Mammary epithelial cell (primary cell): ENCODE measurements at regions of chr18 and their contacts with region 1.

Region 1: DNA sequence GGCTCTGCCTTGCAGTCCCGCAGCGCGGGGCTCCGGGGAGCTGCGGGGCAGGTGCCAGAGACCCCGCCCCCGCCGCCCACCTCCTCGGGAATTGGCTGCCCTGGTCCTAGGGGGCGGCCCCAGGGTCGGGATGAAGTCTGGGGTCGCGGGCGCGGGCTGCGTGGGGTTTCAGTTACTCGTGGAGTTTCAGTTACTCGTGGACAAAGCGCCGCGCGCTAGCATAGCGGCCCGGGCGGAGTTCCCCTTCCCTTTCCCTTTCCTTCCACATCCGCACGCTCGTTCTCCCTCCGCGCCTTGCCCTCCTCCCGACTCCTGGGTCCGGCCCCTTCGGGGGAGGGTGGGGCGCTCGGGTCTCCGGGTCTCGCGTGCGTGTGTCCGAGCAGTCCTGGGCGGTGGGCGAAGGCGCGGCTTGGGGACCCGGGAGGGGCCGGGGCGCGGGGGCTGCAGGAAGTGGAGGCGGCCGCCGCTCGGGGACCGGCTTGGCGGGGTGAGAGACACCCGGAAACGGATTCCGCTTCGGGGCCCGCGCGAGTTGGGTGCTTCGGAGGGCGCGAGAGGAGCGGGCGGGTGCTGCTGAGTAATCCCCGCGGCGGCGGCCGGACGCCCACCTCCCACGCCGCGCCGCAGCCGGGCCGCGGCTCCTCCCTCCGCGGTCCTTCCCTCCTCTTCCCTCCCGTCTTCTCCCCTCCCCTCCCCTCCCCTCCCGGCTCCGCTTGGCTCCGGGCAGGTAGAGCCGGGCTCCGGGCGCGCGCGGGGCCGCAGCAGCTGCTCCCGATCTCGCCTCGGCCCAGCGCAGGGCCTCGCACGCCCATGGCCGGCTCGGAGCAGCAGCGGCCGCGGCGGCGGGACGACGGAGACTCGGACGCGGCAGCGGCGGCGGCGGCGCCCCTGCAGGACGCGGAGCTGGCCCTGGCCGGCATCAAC is at the start of gene TTC39C:
- DNase-seq: peak; percentile 83
- H3K4me3 ChIP-seq: peak within 1 kb of the TSS; percentile 75 to 94 (median 84)
- H3K27ac ChIP-seq: peak within 1 kb of the TSS; percentile 69
- H3K4me1 ChIP-seq: peaks cover 30% of the 10 kb centered on the region
- H3K27me3 ChIP-seq: no peaks in the 10 kb centered on the region
- CTCF ChIP-seq: no peak
- total RNA-seq, gene TTC39C: 12.0 to 31.0 TPM

Region 2: GRCh38 chr18:23900994-23901393 is 113.3 kb before region 1 on chr18:
- CTCF ChIA-PET with region 1: no interaction called
- dilution Hi-C with region 1: no loop called
- in situ Hi-C with region 1: no loop called
- intact Hi-C with region 1: no loop called
- DNase-seq: no peak
- H3K4me3 ChIP-seq: no peak overlapping the region
- H3K27ac ChIP-seq: no peak overlapping the region
- H3K4me1 ChIP-seq: no peaks in the 10 kb centered on the region
- H3K27me3 ChIP-seq: no peaks in the 10 kb centered on the region
- CTCF ChIP-seq: no peak

Region 3: GRCh38 chr18:23967321-23968089 is 46.8 kb before region 1 on chr18:
- CTCF ChIA-PET with region 1: no interaction called
- dilution Hi-C with region 1: loop called (anchors 5 kb)
- in situ Hi-C with region 1: no loop called
- intact Hi-C with region 1: loop called (anchors 2 kb)
- DNase-seq: no peak
- H3K4me3 ChIP-seq: no peak overlapping the region
- H3K27ac ChIP-seq: no peak overlapping the region
- H3K4me1 ChIP-seq: peaks cover 13% of the 10 kb centered on the region
- H3K27me3 ChIP-seq: no peaks in the 10 kb centered on the region
- CTCF ChIP-seq: no peak

Region 4: GRCh38 chr18:23998811-23999210 is 15.5 kb before region 1 on chr18:
- CTCF ChIA-PET with region 1: no interaction called
- dilution Hi-C with region 1: no loop called
- in situ Hi-C with region 1: no loop called
- intact Hi-C with region 1: loop called (anchors 1 kb)
- DNase-seq: peak; percentile 99
- H3K4me3 ChIP-seq: no peak overlapping the region
- H3K27ac ChIP-seq: peak overlapping the region; percentile 72
- H3K4me1 ChIP-seq: peaks cover 32% of the 10 kb centered on the region
- H3K27me3 ChIP-seq: no peaks in the 10 kb centered on the region
- CTCF ChIP-seq: no peak

Region 5: DNA sequence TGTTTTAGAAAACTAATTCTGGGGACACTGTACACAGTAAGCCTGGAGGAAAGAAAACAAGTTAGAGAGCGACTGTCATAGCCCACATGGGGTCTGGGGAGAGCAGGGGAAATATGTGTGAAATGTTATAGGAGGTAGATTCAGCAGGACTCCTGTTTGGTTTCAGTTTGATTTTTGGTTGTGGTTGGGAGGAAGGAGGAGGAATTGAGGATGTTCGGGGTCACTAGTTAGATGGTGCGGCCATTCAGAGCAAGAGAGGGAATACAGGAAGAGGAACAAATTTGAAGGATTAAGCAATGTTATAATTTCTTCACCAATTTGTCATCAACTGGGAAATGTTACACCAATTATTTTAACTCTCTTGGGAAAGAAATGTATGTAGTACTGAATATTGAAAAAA is 25.3 kb after region 1 on chr18:
- CTCF ChIA-PET with region 1: no interaction called
- dilution Hi-C with region 1: loop called (anchors 5 kb)
- in situ Hi-C with region 1: no loop called
- intact Hi-C with region 1: no loop called
- DNase-seq: no peak
- H3K4me3 ChIP-seq: no peak overlapping the region
- H3K27ac ChIP-seq: no peak overlapping the region
- H3K4me1 ChIP-seq: no peaks in the 10 kb centered on the region
- H3K27me3 ChIP-seq: no peaks in the 10 kb centered on the region
- CTCF ChIP-seq: no peak

Region 6: DNA sequence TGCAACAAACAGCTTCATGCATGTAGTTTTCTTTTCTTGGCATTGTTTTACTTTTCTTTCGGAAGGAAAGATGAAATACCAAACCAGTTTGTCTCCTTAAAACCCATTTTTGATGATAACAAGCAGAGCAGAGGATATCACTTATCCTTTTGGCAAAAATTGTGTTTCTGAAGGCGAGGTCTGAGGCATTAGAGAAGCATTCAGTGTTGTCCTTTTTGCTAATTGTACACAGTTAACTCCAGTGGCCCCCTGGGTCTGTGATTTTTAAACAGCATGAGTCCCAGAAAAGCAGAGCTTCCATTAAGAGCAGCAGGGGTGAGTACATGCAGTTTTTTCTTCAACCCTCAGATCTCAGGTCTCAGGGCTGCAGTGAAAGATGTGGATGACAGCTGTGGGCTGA is 41.6 kb after region 1 on chr18:
- CTCF ChIA-PET with region 1: no interaction called
- dilution Hi-C with region 1: no loop called
- in situ Hi-C with region 1: no loop called
- intact Hi-C with region 1: loop called (anchors 5 kb)
- DNase-seq: no peak
- H3K4me3 ChIP-seq: no peak overlapping the region
- H3K27ac ChIP-seq: peak overlapping the region; percentile 81
- H3K4me1 ChIP-seq: peaks cover 52% of the 10 kb centered on the region
- H3K27me3 ChIP-seq: no peaks in the 10 kb centered on the region
- CTCF ChIP-seq: no peak

Region 7: DNA sequence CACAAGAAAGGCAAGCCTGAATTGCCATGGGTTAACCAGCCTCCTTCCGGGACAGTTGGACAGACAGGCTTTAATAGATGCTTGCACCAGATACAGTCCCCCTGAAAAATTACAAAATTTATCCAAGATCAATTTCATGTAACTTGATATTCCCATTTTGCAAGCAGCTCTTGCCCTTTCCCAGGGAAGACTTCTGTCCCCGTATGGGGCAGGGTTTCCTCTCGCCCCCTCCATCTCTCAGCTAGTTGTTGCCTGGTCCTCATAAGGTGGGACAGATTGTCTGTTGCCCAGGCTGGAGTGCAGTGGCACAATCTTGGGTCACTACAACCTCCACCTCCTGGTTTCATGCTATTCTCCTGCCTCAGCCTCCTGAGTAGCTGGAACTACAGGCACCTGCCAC is 61.4 kb after region 1 on chr18:
- CTCF ChIA-PET with region 1: no interaction called
- dilution Hi-C with region 1: no loop called
- in situ Hi-C with region 1: no loop called
- intact Hi-C with region 1: loop called (anchors 5 kb)
- DNase-seq: no peak
- H3K4me3 ChIP-seq: no peak overlapping the region
- H3K27ac ChIP-seq: no peak overlapping the region
- H3K4me1 ChIP-seq: peaks cover 5% of the 10 kb centered on the region
- H3K27me3 ChIP-seq: no peaks in the 10 kb centered on the region
- CTCF ChIP-seq: no peak

Region 8: DNA sequence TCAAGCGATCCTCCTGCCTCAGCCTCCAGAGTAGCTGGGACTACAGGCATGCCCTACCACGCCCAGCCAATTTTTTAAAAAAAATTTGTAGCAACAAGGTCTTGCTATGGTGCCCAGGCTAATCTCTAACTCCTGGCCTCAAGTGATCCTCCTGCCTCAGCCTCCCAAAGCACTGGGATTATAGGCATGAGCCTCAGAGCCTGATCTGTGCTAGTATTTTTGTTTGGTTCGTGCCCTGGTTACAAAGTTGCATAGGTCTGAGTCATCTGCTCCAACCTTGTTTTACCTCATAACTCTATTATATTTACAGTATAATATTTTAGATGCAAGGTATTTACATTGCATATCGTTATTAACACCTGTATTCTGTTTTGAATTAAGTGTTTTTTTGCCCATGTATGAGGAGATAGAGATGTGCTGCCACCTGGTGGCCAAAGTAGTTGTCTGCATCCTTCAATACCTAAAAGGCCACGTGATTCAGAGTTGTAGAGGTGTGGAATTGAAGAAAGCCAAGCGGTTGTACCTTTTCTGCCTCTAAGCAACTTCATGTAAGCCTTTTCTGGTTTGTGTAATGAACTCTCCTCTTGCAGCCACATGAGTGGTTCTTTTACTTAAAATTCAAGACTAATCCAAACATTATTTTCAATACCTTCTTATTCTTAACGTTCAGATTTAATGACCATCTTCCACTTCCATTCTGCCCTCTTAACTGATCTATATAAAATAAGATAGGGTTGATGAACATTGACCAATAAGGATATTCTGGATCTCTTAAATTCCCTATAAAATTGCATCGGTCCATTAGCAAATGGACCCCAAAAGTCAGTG is 104.6 kb after region 1 on chr18:
- CTCF ChIA-PET with region 1: no interaction called
- dilution Hi-C with region 1: no loop called
- in situ Hi-C with region 1: no loop called
- intact Hi-C with region 1: loop called (anchors 5 kb)
- DNase-seq: peak; percentile 69
- H3K4me3 ChIP-seq: no peak overlapping the region
- H3K27ac ChIP-seq: no peak overlapping the region
- H3K4me1 ChIP-seq: no peaks in the 10 kb centered on the region
- H3K27me3 ChIP-seq: no peaks in the 10 kb centered on the region
- CTCF ChIP-seq: peak; percentile 75

Region 9: DNA sequence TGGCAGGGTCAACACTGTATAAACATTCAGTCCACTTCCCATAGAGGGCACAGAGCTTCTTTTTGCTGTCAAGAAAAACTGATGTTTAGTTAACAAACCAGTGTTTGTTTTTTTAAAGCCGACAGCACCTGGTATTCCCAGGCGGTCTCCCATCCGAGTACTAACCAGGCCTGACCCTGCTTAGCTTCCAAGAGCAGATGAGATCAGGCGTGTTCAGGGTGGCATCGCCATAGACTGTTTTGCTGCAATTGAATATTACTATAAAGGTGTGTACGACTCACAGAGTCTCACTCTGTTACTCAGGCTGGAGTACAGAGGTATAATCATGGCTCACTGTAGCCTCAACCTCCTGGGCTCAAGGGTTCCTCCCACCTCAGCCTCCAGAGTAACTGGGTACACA is 156.1 kb after region 1 on chr18:
- CTCF ChIA-PET with region 1: no interaction called
- dilution Hi-C with region 1: no loop called
- in situ Hi-C with region 1: no loop called
- intact Hi-C with region 1: no loop called
- DNase-seq: no peak
- H3K4me3 ChIP-seq: no peak overlapping the region
- H3K27ac ChIP-seq: no peak overlapping the region
- H3K4me1 ChIP-seq: no peaks in the 10 kb centered on the region
- H3K27me3 ChIP-seq: no peaks in the 10 kb centered on the region
- CTCF ChIP-seq: no peak